Psoas muscle (tissue), 8 donors: ENCODE measurements at regions of chr2 and their contacts with region 1.

Region 1: DNA sequence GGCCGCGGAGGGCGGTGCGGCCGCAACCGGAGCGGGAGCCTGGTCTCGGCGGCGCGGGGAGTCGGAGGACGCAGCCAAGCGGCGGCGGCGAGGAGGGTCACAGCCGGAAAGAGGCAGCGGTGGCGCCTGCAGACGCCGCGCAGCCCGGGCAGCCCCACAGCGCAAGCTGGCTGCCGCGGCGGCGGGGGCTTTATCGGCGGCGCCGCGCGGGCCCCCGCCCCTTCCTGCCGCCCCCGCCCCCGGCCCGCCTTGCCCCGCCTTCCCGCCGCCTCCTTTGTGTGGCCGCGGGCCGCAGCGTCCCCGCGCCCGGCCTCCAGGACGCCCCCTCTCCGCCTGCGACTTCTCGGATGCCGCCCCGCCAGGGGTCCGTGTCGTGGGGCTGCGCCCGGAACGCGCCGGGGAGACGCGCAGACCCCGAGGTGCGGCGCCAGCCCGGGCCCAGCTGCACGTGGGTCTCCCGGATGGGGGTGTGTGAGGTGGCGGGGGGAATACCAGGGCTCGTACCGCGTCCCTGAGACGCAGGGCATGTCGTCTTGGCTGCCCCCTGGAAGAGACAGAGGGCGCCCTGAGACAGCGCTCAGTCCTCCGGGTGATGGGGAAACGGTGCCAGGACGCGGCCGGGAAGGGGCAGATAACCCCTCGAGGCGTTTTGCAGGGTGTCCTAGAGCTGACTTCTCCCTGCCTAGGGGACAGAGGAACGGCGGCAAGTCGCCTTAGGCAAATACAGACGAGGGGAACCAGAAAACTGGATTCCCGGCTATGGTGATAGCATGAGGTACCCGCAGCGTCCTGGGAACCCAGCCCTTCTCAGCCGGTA is at the start of gene SERPINE2:
- DNase-seq: peak; percentile 52 to 78
- ATAC-seq: peak; percentile 55 to 90 (median 80)
- H3K4me3 ChIP-seq: peak within 1 kb of the TSS; percentile 78
- H3K27ac ChIP-seq: no peak within 1 kb of the TSS
- H3K4me1 ChIP-seq: peaks cover 5% of the 10 kb centered on the region
- H3K27me3 ChIP-seq: peaks cover 0 to 27% (median 0%) of the 10 kb centered on the region in 3 donors
- CTCF ChIP-seq: peak; percentile 21
- total RNA-seq, gene SERPINE2: 2.1 to 20.8 (median 8.8) TPM

Region 2: GRCh38 chr2:223993621-223994232 is 45.6 kb before region 1 on chr2:
- intact Hi-C with region 1: loop called in 1 of 2 experiments (anchors 5 kb)
- DNase-seq: peak in 1 of 2 donors; percentile 26
- ATAC-seq: peak; percentile 71 to 87 (median 78)
- H3K4me3 ChIP-seq: no peak overlapping the region
- H3K27ac ChIP-seq: no peak overlapping the region
- H3K4me1 ChIP-seq: no peaks in the 10 kb centered on the region
- H3K27me3 ChIP-seq: no peaks in the 10 kb centered on the region
- CTCF ChIP-seq: peak; percentile 91

Region 3: GRCh38 chr2:224004105-224004695 is 35.1 kb before region 1 on chr2:
- intact Hi-C with region 1: loop called (anchors 5 kb)
- DNase-seq: no peak
- ATAC-seq: peak; percentile 58 to 87 (median 73)
- H3K4me3 ChIP-seq: no peak overlapping the region
- H3K27ac ChIP-seq: no peak overlapping the region
- H3K4me1 ChIP-seq: peaks cover 26% of the 10 kb centered on the region
- H3K27me3 ChIP-seq: no peaks in the 10 kb centered on the region
- CTCF ChIP-seq: no peak

Region 4: DNA sequence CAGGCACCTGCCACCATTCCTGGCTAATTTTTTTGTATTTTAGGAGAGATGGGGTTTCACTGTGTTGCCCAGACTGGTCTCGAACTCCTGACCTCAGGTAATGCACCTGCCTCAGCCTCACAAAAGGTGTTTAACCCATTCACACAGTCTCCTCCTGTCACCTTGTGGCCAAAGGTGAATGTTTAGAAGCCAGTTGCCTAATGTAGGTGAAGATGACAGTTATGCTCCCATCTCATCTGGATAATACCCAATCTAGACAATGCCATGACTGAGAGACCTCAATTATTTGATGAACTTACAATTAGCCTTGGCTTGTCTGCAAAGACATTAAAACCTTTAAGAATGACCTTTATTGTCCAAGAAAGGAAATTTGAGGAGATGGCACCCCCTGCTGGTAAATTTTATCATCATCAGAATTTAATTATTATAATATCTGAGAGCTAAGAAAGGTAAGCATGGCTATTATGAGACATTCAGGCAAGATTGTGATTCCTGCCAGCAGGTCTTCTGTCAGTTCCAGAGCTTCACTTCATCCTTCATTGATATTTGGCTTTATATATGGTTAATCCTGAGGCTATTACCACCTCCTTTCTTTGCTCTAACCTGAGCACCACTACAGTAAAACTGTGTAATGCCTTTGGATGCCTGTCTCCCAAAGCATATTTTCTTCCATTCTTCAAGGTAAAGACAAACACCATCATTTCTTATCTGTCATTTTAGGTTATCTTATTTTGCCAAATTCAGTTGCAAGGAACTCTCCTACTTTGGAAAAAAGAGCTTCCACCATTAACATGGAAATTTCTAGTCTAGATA is 245.0 kb after region 1 on chr2:
- intact Hi-C with region 1: loop called in 1 of 2 experiments (anchors 1 kb)
- DNase-seq: no peak
- ATAC-seq: peak in 1 of 4 donors; percentile 43
- H3K4me3 ChIP-seq: no peak overlapping the region
- H3K27ac ChIP-seq: no peak overlapping the region
- H3K4me1 ChIP-seq: no peaks in the 10 kb centered on the region
- H3K27me3 ChIP-seq: no peaks in the 10 kb centered on the region
- CTCF ChIP-seq: peak; percentile 80